ENCODE measurements at regions of chr12 and their contacts with region 1.

Region 1: GRCh38 chr12:111024205-111024801 is 103.9 kb upstream of the MYL2 start:
- DNase-seq: peak; percentile 28 to 74 (median 55)
- ATAC-seq: peak; percentile 70 to 90 (median 83)
- H3K4me3 ChIP-seq: no peak overlapping the region
- H3K27ac ChIP-seq: no peak overlapping the region
- H3K4me1 ChIP-seq: no peaks in the 10 kb centered on the region
- H3K27me3 ChIP-seq: peaks cover 0 to 26% (median 0%) of the 10 kb centered on the region in 9 donors
- CTCF ChIP-seq: peak; percentile 52 to 79 (median 64)
- POLR2A ChIP-seq: no peak

Region 2: GRCh38 chr12:111174251-111174960 is 150.1 kb after region 1 on chr12:
- intact Hi-C with region 1: loop called in 3 of 10 experiments (anchors 5 to 10 kb)
- DNase-seq: no peak
- ATAC-seq: peak in 3 of 4 donors; percentile 29 to 49 (median 47)
- H3K4me3 ChIP-seq: no peak overlapping the region
- H3K27ac ChIP-seq: no peak overlapping the region
- H3K4me1 ChIP-seq: peaks cover 0 to 39% (median 0%) of the 10 kb centered on the region in 12 donors
- H3K27me3 ChIP-seq: peaks cover 0 to 5% (median 0%) of the 10 kb centered on the region in 9 donors
- CTCF ChIP-seq: peak in 8 of 12 donors; percentile 10 to 38 (median 20)
- POLR2A ChIP-seq: no peak

Region 3: GRCh38 chr12:111298582-111299436 is 274.5 kb after region 1 on chr12:
- intact Hi-C with region 1: loop called in 9 of 10 experiments (anchors 2 to 10 kb)
- DNase-seq: peak in 4 of 5 donors; percentile 27 to 54 (median 40)
- ATAC-seq: peak in 3 of 4 donors; percentile 72 to 74 (median 72)
- H3K4me3 ChIP-seq: no peak overlapping the region
- H3K27ac ChIP-seq: no peak overlapping the region
- H3K4me1 ChIP-seq: no peaks in the 10 kb centered on the region
- H3K27me3 ChIP-seq: no peaks in the 10 kb centered on the region
- CTCF ChIP-seq: peak; percentile 61 to 87 (median 76)
- POLR2A ChIP-seq: no peak

Region 4: GRCh38 chr12:111313833-111314259 is 289.5 kb after region 1 on chr12:
- intact Hi-C with region 1: loop called in 3 of 10 experiments (anchors 5 kb)
- DNase-seq: peak; percentile 56 to 87 (median 71)
- ATAC-seq: peak; percentile 24 to 81 (median 74)
- H3K4me3 ChIP-seq: peak overlapping the region in 2 of 12 donors; percentile 4 to 41
- H3K27ac ChIP-seq: no peak overlapping the region
- H3K4me1 ChIP-seq: peaks cover 0 to 24% (median 0%) of the 10 kb centered on the region in 12 donors
- H3K27me3 ChIP-seq: peaks cover 0 to 3% (median 0%) of the 10 kb centered on the region in 9 donors
- CTCF ChIP-seq: peak; percentile 82 to 94 (median 92)
- POLR2A ChIP-seq: no peak

Measured in heart left ventricle (tissue), 16 donors.